ENCODE measurements at regions of chr2 and their contacts with region 1.

Region 1: DNA sequence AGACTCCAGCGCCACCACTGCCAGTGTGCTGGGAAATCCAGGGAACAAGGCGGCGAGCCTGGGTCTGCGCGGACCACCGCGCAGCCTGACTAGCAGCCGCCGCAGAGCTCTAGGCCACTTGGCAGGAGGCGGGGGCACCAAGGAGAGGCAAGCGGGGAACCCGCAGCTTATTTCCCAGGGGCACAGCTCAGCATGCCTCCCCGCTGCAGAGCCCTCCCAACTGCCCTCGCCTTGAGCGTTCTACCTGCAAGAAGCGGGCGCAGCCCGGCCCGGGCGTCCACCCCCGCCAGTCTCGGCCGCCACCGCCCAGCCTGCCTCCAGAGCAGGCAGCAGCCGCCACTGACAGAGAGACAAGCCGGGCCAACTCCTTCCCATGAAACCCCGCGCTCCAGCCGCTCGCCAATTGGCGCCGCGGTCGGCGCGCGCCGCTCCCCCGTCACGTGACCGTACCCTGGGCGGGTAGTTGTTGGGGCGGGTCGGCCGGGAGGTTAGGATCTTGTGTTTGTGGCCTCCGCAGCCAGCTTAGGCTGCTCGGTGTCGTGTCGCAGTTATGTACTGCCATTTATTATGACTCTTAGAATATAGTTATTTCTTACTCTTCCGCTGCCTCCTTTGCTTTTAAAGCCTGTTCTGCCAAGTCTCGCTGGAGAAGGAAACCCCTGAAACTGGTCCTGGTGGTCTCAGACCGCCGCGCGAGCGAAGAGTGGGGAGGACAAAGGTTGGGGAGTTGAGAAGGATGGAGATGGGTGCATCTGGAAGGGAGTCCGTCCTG is at the start of gene LNPK:
- DNase-seq: peak; percentile 87
- ATAC-seq: peak; percentile 96
- H3K4me3 ChIP-seq: peak within 1 kb of the TSS; percentile 61 to 84 (median 82)
- H3K27ac ChIP-seq: peak within 1 kb of the TSS; percentile 80
- H3K4me1 ChIP-seq: peaks cover 44% of the 10 kb centered on the region
- H3K27me3 ChIP-seq: peaks cover 0 to 9% of the 10 kb centered on the region in 2 experiments; a peak in 1 of 5 replicates
- CTCF ChIP-seq: peak; percentile 39
- EP300 ChIP-seq: peak in 1 of 2 experiments; percentile 42; a peak in 1 of 4 replicates
- POLR2A ChIP-seq: peak; percentile 88 to 94
- RAD21 ChIP-seq: peak; percentile 53; the same call in 1 of the 2 replicates
- total RNA-seq, gene LNPK: 25.4 and 30.1 TPM in 2 replicates

Region 2: DNA sequence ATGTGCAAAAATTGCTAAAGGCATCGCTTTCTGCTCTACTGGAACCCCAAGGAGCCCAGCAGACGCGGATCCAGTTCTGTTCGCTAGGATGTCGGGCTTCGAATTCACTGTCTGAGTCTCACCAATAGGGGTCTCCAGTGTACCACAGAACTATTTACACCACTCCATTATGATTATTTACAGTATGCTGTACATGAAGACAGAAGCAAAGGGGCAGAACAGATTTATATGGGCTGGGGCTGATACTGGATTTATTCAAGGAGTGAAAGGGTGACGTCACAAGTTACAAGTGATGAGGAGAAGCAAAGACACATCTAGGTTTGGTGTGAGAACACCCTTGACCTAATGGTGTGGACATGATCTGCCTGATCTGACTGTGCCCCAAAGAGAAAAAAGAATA is 635.3 kb before region 1 on chr2:
- CTCF ChIA-PET with region 1: no interaction called
- POLR2A ChIA-PET with region 1: no interaction called
- in situ Hi-C with region 1: no loop called
- intact Hi-C with region 1: loop called (anchors 5 kb)
- DNase-seq: peak; percentile 53
- ATAC-seq: peak; percentile 97
- H3K4me3 ChIP-seq: no peak overlapping the region
- H3K27ac ChIP-seq: no peak overlapping the region
- H3K4me1 ChIP-seq: no peaks in the 10 kb centered on the region
- H3K27me3 ChIP-seq: peaks cover 0 to 37% of the 10 kb centered on the region in 2 experiments; a peak in 3 of 5 replicates
- CTCF ChIP-seq: peak; percentile 91
- EP300 ChIP-seq: no peak
- POLR2A ChIP-seq: no peak
- RAD21 ChIP-seq: peak; percentile 84

Region 3: DNA sequence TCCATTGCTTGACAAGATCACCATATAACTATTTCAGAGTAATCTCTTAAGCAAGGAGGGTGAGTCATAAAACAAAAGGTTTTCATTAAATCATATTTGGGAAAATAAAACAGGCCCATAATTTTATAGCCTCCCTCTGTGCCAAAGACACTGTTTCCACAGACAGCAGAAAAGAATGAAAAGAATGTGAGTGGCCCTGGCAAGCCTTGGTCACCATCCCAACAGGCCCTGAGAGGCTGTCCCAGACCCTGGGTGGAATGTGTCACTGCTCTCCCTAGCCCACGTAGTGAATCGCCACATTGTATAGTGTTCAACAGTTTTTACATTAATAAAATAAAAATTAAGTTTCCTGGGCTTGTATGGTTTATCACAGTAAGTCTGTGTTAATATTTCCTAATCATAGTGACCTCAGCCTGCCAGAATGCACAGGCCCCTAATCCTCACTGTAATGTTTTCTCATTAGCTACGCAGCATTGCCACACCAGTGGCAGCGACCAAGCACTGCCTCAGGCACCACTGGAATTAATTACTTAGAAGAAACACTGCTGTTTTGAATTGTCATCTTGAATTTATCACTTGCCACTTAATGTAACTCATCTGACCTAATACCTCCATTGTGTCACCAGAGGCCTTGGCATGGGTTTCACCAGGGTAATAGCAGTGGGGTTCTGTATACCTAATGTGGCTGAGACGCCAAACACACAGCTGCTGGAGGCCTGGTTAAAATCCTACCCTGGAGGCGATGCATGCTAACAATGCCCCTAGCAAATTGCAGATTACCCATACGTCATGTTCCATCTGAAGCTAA is 401.9 kb before region 1 on chr2:
- CTCF ChIA-PET with region 1: no interaction called
- POLR2A ChIA-PET with region 1: interaction called, 6 read pairs
- in situ Hi-C with region 1: no loop called
- intact Hi-C with region 1: loop called (anchors 10 kb)
- DNase-seq: no peak
- ATAC-seq: peak; percentile 79
- H3K4me3 ChIP-seq: no peak overlapping the region
- H3K27ac ChIP-seq: no peak overlapping the region
- H3K4me1 ChIP-seq: peaks cover 54% of the 10 kb centered on the region
- H3K27me3 ChIP-seq: no peaks in the 10 kb centered on the region
- CTCF ChIP-seq: no peak
- EP300 ChIP-seq: no peak
- POLR2A ChIP-seq: no peak
- RAD21 ChIP-seq: no peak

Region 4: DNA sequence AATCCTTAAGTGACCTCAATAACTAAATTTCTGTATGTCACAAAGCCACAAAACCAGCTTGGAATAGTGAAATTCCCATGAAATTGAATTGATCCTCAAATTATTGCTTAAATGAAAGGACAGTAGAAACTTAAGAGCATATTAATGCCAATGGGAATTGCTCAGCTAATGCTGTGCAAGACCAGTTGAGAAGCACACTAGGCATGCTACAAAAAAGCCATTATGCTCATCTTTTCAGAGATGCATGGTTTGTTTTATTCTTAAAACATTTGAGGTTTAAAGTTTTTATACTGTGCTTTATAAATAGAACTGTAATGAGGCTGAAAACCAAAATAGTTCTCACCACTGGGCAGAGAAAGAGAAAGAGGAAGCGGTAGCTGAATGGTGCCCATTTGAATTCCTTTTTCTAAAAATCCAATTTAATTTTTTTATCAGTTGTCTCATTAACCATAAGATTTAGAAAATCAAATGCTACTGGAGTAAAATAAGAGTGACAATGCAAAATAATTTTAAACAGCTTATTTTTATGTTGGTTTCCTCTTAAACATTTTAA is 98.6 kb before region 1 on chr2:
- CTCF ChIA-PET with region 1: no interaction called
- POLR2A ChIA-PET with region 1: no interaction called
- in situ Hi-C with region 1: no loop called
- intact Hi-C with region 1: no loop called
- DNase-seq: no peak
- ATAC-seq: no peak
- H3K4me3 ChIP-seq: no peak overlapping the region
- H3K27ac ChIP-seq: no peak overlapping the region
- H3K4me1 ChIP-seq: no peaks in the 10 kb centered on the region
- H3K27me3 ChIP-seq: peaks cover 0 to 14% of the 10 kb centered on the region in 2 experiments; a peak in 3 of 5 replicates
- CTCF ChIP-seq: no peak
- EP300 ChIP-seq: no peak
- POLR2A ChIP-seq: no peak
- RAD21 ChIP-seq: no peak

Region 5: DNA sequence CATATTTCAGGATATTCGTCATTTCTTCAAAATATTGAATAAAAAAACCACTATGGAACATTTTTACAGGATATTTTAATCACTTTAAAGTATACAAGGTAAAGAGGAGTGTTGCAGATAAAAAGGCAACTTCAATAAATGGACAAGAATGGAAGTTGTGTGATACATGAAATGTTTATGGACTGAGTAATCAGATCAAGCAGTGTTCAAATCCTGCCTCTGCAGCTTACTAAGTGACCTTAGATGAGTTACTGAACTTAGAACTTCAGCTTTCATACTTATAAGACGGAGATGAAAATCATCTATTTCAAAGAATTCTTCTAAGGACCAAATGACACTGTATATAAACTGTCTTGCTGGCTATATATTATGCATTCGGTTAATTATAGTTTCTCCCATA is 87.3 kb before region 1 on chr2:
- CTCF ChIA-PET with region 1: no interaction called
- POLR2A ChIA-PET with region 1: interaction called, 18 read pairs
- in situ Hi-C with region 1: no loop called
- intact Hi-C with region 1: loop called (anchors 5 kb)
- DNase-seq: no peak
- ATAC-seq: no peak
- H3K4me3 ChIP-seq: no peak overlapping the region
- H3K27ac ChIP-seq: no peak overlapping the region
- H3K4me1 ChIP-seq: peaks cover 24% of the 10 kb centered on the region
- H3K27me3 ChIP-seq: peaks cover 0 to 2% of the 10 kb centered on the region in 2 experiments; a peak in 1 of 5 replicates
- CTCF ChIP-seq: no peak
- EP300 ChIP-seq: no peak
- POLR2A ChIP-seq: no peak
- RAD21 ChIP-seq: no peak

Region 6: GRCh38 chr2:175964195-175964594 is 37.9 kb before region 1 on chr2:
- CTCF ChIA-PET with region 1: no interaction called
- POLR2A ChIA-PET with region 1: no interaction called
- in situ Hi-C with region 1: no loop called
- intact Hi-C with region 1: loop called (anchors 1 kb)
- DNase-seq: peak; percentile 20
- ATAC-seq: peak; percentile 66
- H3K4me3 ChIP-seq: no peak overlapping the region
- H3K27ac ChIP-seq: no peak overlapping the region
- H3K4me1 ChIP-seq: no peaks in the 10 kb centered on the region
- H3K27me3 ChIP-seq: no peaks in the 10 kb centered on the region
- CTCF ChIP-seq: 0 out of 2 replicates have a peak, but pooled peaks have one; percentile 26
- EP300 ChIP-seq: no peak
- POLR2A ChIP-seq: no peak
- RAD21 ChIP-seq: peak; percentile 19; the same call in 1 of the 2 replicates

Region 7: DNA sequence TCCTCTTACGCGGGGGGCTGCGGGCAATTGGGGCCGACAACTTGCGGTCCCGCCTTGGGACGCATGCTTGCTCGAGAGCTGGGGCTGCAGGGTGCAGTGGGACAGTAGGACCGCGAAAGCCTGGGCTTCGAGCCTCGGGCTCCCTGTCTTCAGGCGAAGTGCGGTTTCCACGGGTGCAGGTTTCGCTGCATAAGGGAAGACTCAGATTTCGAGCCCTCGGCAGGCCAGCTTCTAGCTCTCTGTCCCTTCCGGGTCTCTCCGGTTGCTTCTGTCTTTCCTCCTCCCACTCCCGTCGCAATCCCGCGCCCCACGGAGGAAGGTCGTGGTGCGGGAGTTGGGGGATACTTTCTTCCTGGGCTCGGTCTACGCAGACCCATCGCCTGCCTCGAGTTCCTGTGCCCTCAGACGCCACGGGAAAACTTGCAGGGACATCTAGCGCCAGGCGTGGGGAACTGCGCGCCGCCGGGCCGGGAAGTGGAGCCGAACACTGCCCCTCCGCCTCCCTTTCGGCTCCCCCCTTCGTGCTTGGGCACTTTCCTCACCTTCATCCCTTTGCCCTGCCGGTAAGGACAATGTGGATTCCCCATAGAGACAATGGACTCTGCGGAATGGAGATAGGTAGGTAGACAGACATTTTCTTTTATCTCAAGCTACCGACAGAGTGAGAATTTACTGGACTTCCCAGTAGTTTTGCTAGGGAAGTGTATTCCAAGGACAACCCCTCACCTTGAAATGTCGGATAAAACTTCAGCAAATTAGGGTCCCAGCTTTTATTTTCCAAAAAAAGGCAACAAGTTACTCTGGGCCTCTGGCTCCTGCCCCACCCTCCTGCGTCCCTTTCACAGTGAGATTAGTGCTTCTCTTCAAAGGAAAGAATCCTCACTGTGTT is 86.2 kb after region 1 on chr2:
- CTCF ChIA-PET with region 1: no interaction called
- POLR2A ChIA-PET with region 1: no interaction called
- in situ Hi-C with region 1: no loop called
- intact Hi-C with region 1: loop called (anchors 1 kb)
- DNase-seq: peak; percentile 40
- ATAC-seq: peak; percentile 92
- H3K4me3 ChIP-seq: peak overlapping the region; percentile 36 to 75 (median 51); a peak in 5 of 6 replicates
- H3K27ac ChIP-seq: no peak overlapping the region
- H3K4me1 ChIP-seq: peaks cover 25% of the 10 kb centered on the region
- H3K27me3 ChIP-seq: peaks cover 19 to 94% of the 10 kb centered on the region in 2 experiments
- CTCF ChIP-seq: peak; percentile 96
- EP300 ChIP-seq: no peak
- POLR2A ChIP-seq: no peak
- RAD21 ChIP-seq: peak; percentile 87

Measured in HepG2 (cell line).